Activated B cell treated with CpG ODN at 0.5 μM for 24 hours (primary cell): ENCODE measurements at regions of chr16 and their contacts with region 1.

Region 1: GRCh38 chr16:67993189-67994039 is 5.9 kb downstream of the DPEP2 start:
- DNase-seq: peak; percentile 88
- ATAC-seq: peak; percentile 77
- H3K4me3 Mint-ChIP-seq: peak overlapping the region; percentile 77
- H3K27ac Mint-ChIP-seq: peak overlapping the region; percentile 98
- H3K4me1 Mint-ChIP-seq: peaks cover 78% of the 10 kb centered on the region
- H3K27me3 Mint-ChIP-seq: no peaks in the 10 kb centered on the region
- CTCF ChIP-seq: peak; percentile 47

Region 2: GRCh38 chr16:67667817-67668494 is 325.5 kb before region 1 on chr16:
- CTCF ChIA-PET with region 1: no interaction called
- POLR2A ChIA-PET with region 1: no interaction called
- intact Hi-C with region 1: loop called (anchors 5 kb)
- DNase-seq: peak; percentile 66
- ATAC-seq: peak; percentile 84
- H3K4me3 Mint-ChIP-seq: peak overlapping the region; percentile 87
- H3K27ac Mint-ChIP-seq: peak overlapping the region; percentile 85
- H3K4me1 Mint-ChIP-seq: peaks cover 49% of the 10 kb centered on the region
- H3K27me3 Mint-ChIP-seq: no peaks in the 10 kb centered on the region
- CTCF ChIP-seq: no peak

Region 3: GRCh38 chr16:67968400-67969253 is 24.8 kb before region 1 on chr16 and contains the start of gene SLC12A4:
- CTCF ChIA-PET with region 1: no interaction called
- POLR2A ChIA-PET with region 1: interaction called, 5 read pairs
- intact Hi-C with region 1: loop called (anchors 1 kb)
- DNase-seq: peak; percentile 87
- ATAC-seq: peak; percentile 93
- H3K4me3 Mint-ChIP-seq: peak within 1 kb of the TSS; percentile 96
- H3K27ac Mint-ChIP-seq: peak within 1 kb of the TSS; percentile 80
- H3K4me1 Mint-ChIP-seq: peaks cover 28% of the 10 kb centered on the region
- H3K27me3 Mint-ChIP-seq: no peaks in the 10 kb centered on the region
- CTCF ChIP-seq: no peak
- total RNA-seq, gene SLC12A4: 24.6 and 37.9 TPM in 2 replicates

Region 4: DNA sequence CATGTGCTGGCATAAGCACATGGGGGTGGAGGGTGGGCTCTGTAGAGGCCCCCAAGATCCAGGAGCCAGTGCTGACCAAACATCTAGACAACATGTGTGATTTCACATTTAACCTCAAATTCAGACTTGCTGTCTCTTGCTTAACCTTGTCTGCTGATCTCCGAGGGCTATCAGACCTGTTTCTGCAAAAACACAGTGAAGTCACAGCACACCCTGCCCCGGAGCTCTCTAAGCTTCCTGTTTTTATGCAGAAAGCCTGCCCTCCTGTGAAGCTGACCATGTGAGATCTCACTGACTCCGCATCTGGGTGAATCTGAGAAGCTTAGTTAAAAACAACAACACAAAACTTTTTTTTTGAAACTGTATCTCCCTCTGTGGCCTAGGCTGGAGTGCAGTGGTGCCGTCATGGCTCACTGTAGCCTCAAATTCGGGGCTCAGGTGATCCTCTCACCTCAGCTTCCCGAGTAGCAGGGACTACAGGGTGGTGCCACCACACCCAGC is 12.4 kb after region 1 on chr16:
- CTCF ChIA-PET with region 1: interaction called, 7 read pairs
- POLR2A ChIA-PET with region 1: interaction called, 28 read pairs
- intact Hi-C with region 1: loop called (anchors 1 kb)
- DNase-seq: no peak
- ATAC-seq: peak; percentile 98
- H3K4me3 Mint-ChIP-seq: peak overlapping the region; percentile 58
- H3K27ac Mint-ChIP-seq: peak overlapping the region; percentile 95
- H3K4me1 Mint-ChIP-seq: peaks cover 40% of the 10 kb centered on the region
- H3K27me3 Mint-ChIP-seq: no peaks in the 10 kb centered on the region
- CTCF ChIP-seq: no peak

Region 5: GRCh38 chr16:68229431-68230198 is 236.2 kb after region 1 on chr16:
- CTCF ChIA-PET with region 1: no interaction called
- POLR2A ChIA-PET with region 1: no interaction called
- intact Hi-C with region 1: loop called (anchors 1 kb)
- DNase-seq: no peak
- ATAC-seq: peak; percentile 63
- H3K4me3 Mint-ChIP-seq: no peak overlapping the region
- H3K27ac Mint-ChIP-seq: peak overlapping the region; percentile 41
- H3K4me1 Mint-ChIP-seq: peaks cover 35% of the 10 kb centered on the region
- H3K27me3 Mint-ChIP-seq: no peaks in the 10 kb centered on the region
- CTCF ChIP-seq: peak; percentile 29